ENCODE measurements at regions of chr21 and their contacts with region 1.

Region 1: GRCh38 chr21:37366482-37367316 is at the start of gene DYRK1A:
- DNase-seq: peak; percentile 100

Region 2: GRCh38 chr21:37267269-37268184 is 99.2 kb before region 1 on chr21 and contains the start of gene VPS26C:
- CTCF ChIA-PET with region 1: no interaction called
- POLR2A ChIA-PET with region 1: interaction called, 21 read pairs
- DNase-seq: peak; percentile 97

Region 3: DNA sequence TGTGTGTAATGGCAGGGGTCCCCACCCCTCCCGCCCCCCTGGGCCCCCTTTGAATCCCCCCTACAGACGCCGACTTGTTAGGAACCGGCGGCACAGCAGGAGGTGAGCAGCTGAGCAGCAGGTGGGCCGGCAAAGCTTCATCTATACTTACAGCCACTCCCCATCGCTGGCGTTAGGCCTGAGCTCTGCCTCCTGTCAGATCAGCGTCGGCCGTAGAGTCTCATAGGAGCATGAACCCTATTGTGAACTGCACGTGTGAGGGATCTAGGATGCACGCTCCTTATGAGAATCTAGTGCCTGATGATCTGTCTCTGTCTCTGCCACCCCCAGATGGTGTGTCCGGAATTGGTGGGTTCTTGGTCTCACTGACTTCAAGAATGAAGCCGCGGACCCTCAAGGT is 84.7 kb before region 1 on chr21:
- CTCF ChIA-PET with region 1: no interaction called
- POLR2A ChIA-PET with region 1: no interaction called
- DNase-seq: no peak

Measured in HEK293T (cell line).